Right ventricle myocardium superior (tissue), 1 donor: ENCODE measurements at regions of chr19 and their contacts with region 1.

Region 1: GRCh38 chr19:47124937-47125668 is 5.5 kb upstream of the SAE1 start:
- DNase-seq: no peak
- ATAC-seq: peak; percentile 80

Region 2: GRCh38 chr19:46975925-46976782 is 148.9 kb before region 1 on chr19:
- intact Hi-C with region 1: no loop called
- DNase-seq: peak; percentile 98
- ATAC-seq: peak; percentile 90

Region 3: DNA sequence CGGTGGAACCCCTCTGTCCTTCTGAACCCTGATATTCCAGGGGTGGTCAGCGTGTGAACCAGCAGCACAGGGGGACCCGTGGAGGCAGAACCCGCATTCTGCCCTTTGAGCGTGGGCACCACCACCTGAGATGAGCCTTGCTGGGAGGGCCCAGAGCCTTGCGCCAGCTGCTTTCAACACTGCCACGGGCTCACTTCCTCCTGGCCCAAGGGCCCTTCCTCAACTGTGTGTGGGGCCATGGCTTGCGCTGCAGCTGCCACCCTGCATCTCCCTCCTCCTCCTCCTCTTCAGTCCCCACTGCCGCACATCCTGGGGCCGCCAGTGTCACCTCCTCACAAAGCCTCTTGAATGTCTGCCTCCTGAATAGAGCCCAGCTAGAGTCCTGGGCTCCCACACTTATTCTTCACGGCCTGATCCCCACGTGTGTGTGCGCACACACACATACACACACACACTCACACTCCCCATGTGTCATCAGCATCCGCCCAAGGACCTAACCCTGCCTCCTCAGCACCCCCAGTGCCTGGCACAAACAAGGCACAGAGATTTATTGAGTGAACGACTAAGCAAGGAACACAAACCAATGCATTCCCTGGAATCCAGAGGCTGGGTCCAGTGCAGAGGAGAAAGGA is 49.8 kb before region 1 on chr19:
- intact Hi-C with region 1: loop called (anchors 2 kb)
- DNase-seq: peak; percentile 65
- ATAC-seq: peak; percentile 15

Region 4: GRCh38 chr19:47157431-47158321 is 32.6 kb after region 1 on chr19:
- intact Hi-C with region 1: no loop called
- DNase-seq: peak; percentile 57
- ATAC-seq: peak; percentile 63

Region 5: GRCh38 chr19:47267350-47267759 is 142.3 kb after region 1 on chr19:
- intact Hi-C with region 1: no loop called
- DNase-seq: no peak
- ATAC-seq: no peak